Caco-2 (cell line): ENCODE measurements at regions of chr17 and their contacts with region 1.

Region 1: GRCh38 chr17:75319904-75320691 is 30.9 kb upstream of the SLC25A19 start:
- DNase-seq: no peak
- H3K4me3 ChIP-seq: no peak overlapping the region
- H3K4me3 Mint-ChIP-seq: no peak overlapping the region
- H3K27ac Mint-ChIP-seq: no peak overlapping the region
- H3K4me1 ChIP-seq: no peaks in the 10 kb centered on the region
- H3K4me1 Mint-ChIP-seq: no peaks in the 10 kb centered on the region
- H3K27me3 ChIP-seq: no peaks in the 10 kb centered on the region
- H3K27me3 Mint-ChIP-seq: no peaks in the 10 kb centered on the region
- CTCF ChIP-seq: no peak

Region 2: GRCh38 chr17:75205037-75205792 is 114.9 kb before region 1 on chr17 and contains the start of gene NUP85:
- CTCF ChIA-PET with region 1: no interaction called
- POLR2A ChIA-PET with region 1: no interaction called
- intact Hi-C with region 1: no loop called
- DNase-seq: peak; percentile 98
- H3K4me3 ChIP-seq: peak within 1 kb of the TSS; percentile 92
- H3K4me3 Mint-ChIP-seq: peak within 1 kb of the TSS; percentile 87
- H3K27ac Mint-ChIP-seq: peak within 1 kb of the TSS; percentile 100
- H3K4me1 ChIP-seq: peaks cover 11% of the 10 kb centered on the region; the same call in 1 of the 2 replicates
- H3K4me1 Mint-ChIP-seq: peaks cover 6% of the 10 kb centered on the region
- H3K27me3 ChIP-seq: no peaks in the 10 kb centered on the region
- H3K27me3 Mint-ChIP-seq: no peaks in the 10 kb centered on the region
- CTCF ChIP-seq: no peak
- total RNA-seq, gene NUP85: 119 and 142 TPM in 2 replicates

Region 3: DNA sequence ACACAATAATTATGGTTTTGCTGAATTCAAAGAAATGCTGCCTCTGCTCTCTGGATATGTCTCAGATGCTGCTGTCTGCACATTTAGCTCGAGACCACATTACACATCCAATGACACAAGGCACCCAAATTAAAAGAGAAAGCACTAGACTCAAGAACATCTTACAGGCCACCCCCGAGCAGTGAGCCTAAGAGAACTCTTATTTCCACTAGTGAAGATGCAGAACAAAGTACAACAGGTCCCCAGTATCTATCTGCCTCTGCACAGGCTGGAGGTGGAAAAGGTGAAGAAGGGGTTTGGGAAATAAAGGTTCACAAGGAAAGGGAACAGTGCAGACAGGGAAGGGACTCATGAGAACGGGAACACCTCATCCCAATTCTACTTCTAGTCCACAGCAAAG is 51.9 kb after region 1 on chr17:
- CTCF ChIA-PET with region 1: interaction called, 5 read pairs
- POLR2A ChIA-PET with region 1: interaction called, 12 read pairs
- intact Hi-C with region 1: no loop called
- DNase-seq: no peak
- H3K4me3 ChIP-seq: no peak overlapping the region
- H3K4me3 Mint-ChIP-seq: no peak overlapping the region
- H3K27ac Mint-ChIP-seq: no peak overlapping the region
- H3K4me1 ChIP-seq: no peaks in the 10 kb centered on the region
- H3K4me1 Mint-ChIP-seq: no peaks in the 10 kb centered on the region
- H3K27me3 ChIP-seq: no peaks in the 10 kb centered on the region
- H3K27me3 Mint-ChIP-seq: no peaks in the 10 kb centered on the region
- CTCF ChIP-seq: no peak

Region 4: GRCh38 chr17:75405365-75406221 is 85.5 kb after region 1 on chr17 and contains the start of gene GRB2:
- CTCF ChIA-PET with region 1: interaction called, 8 read pairs
- POLR2A ChIA-PET with region 1: interaction called, 4 read pairs
- intact Hi-C with region 1: loop called (anchors 1 kb)
- DNase-seq: peak; percentile 99 to 100
- H3K4me3 ChIP-seq: peak within 1 kb of the TSS; percentile 70
- H3K4me3 Mint-ChIP-seq: peak within 1 kb of the TSS; percentile 78
- H3K27ac Mint-ChIP-seq: peak within 1 kb of the TSS; percentile 71
- H3K4me1 ChIP-seq: 0 out of 2 replicates have a peak, but pooled peaks cover 6% of the 10 kb centered on the region
- H3K4me1 Mint-ChIP-seq: peaks cover 12% of the 10 kb centered on the region
- H3K27me3 ChIP-seq: no peaks in the 10 kb centered on the region
- H3K27me3 Mint-ChIP-seq: no peaks in the 10 kb centered on the region
- CTCF ChIP-seq: no peak
- total RNA-seq, gene GRB2: 113 and 115 TPM in 2 replicates

Region 5: DNA sequence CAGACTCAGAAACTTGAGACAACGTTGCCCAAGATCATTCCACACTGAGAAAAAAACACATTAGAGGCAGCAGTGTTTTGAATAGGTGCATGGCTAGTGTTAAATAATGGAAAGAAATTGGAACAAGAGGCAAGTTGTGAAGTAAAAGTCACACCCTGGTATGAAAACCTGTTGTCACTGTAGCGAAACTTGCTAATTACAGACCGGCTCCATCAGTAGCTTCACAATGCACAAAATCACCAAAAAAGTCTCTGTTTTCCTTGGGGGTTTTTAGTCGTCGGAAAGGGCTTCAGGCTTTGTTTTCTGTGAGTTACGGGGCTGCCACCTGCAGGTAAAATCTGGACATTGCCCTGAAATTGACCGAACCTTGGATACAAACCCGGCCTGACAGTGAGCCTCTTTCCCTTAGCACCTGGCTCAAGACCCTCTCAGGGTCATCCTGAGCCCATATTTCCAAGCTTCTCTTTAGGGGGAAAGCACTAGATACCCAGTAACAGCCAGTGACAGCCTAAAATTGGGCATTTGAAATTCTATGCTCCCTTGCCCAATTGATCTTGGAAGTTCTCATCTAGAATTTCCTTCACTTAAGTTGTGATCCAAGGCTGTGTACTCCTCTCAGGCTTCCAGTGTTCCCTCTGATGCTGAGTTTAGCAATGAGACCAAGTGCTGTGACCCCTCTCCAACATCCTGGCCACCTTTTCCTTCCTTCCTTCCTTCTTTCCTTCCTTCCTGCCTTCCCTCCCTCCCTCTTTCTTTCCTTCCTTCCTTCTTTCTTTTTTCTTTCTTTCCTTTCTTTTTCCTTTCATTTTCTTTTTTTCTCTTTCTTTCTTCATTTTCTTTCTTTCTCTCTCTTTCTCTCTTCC is 92.6 kb after region 1 on chr17:
- CTCF ChIA-PET with region 1: interaction called, 15 read pairs
- POLR2A ChIA-PET with region 1: no interaction called
- intact Hi-C with region 1: loop called (anchors 1 kb)
- DNase-seq: peak; percentile 69 to 79
- H3K4me3 ChIP-seq: peak overlapping the region; percentile 11; the same call in 1 of the 2 replicates
- H3K4me3 Mint-ChIP-seq: peak overlapping the region; percentile 27
- H3K27ac Mint-ChIP-seq: no peak overlapping the region
- H3K4me1 ChIP-seq: peaks cover 6% of the 10 kb centered on the region
- H3K4me1 Mint-ChIP-seq: no peaks in the 10 kb centered on the region
- H3K27me3 ChIP-seq: no peaks in the 10 kb centered on the region
- H3K27me3 Mint-ChIP-seq: peaks cover 2% of the 10 kb centered on the region
- CTCF ChIP-seq: peak; percentile 80 to 90